ENCODE measurements at regions of chr2 and their contacts with region 1.

Region 1: DNA sequence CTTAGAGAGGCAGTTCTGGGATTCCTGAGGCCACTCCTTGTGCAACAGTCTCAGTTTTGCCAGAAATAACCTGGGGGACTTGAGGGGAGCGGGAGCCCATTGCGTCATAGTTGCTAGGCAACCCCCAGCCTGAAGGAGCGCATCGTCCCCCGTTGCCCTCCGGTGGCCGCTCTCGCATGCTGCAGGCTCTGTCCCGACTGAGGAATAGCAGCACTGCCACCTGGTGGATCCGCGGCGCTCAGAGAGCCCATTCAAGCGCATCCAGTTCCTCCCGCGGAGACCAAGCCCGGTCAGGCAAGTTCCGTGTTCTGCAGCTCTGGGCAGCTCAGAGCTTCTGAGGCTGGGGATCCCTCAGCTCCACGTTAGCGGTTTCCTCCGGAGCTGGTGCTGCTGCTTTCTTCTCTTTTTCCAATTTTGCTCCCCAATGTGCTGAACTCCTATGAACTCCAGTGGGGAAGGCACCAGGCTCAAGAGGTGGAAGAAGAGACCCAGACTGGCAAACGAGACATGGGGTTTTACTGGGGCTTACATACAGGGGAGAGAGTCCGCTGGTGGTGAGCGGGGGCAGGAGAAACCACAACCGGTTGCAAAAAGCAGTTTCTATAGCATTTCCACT is 15.1 kb downstream of the SLC4A3 start:
- DNase-seq: peak; percentile 95
- H3K4me3 Mint-ChIP-seq: no peak overlapping the region
- H3K27ac Mint-ChIP-seq: no peak overlapping the region
- H3K4me1 Mint-ChIP-seq: peaks cover 5% of the 10 kb centered on the region
- H3K27me3 Mint-ChIP-seq: peaks cover 6% of the 10 kb centered on the region

Region 2: DNA sequence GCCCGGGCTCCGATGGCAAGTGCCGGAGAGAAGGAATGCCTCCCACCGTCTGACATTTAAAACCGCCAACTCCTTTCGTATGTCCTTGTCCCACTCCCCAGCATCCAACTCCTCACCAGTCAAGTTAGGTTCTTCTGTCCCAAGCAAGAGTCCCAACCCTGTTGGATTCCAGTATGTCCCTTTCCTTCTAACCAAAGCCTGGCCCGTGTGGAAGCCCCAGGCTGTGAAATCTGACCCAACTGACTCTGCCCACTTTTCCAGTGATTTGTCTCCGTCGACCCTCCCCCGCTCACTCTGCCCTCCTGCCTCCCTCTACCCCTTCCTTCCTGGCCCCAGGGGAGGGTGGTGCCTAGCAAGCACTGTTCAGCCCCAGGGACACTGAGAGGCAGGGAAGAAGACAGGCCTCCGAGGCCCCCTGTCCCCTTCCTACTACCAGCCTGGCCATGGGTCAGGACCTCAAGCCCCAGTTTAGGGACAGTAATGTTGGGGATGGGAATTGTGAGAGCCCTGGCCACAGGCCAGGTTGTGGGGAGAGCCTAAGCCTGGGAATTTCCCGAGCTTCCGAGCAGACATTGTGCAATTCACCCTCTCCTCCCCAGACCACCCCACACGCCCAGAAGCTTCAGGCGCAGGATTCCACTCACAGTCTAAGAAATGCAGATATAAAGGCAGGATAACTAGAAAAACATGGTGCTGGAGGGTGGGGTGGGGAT is 1318.6 kb before region 1 on chr2:
- CTCF ChIA-PET with region 1: no interaction called
- intact Hi-C with region 1: no loop called
- DNase-seq: no peak
- H3K4me3 Mint-ChIP-seq: peak overlapping the region; percentile 78
- H3K27ac Mint-ChIP-seq: no peak overlapping the region
- H3K4me1 Mint-ChIP-seq: peaks cover 39% of the 10 kb centered on the region
- H3K27me3 Mint-ChIP-seq: peaks cover 4% of the 10 kb centered on the region

Region 3: GRCh38 chr2:219475697-219476651 is 166.6 kb before region 1 on chr2:
- CTCF ChIA-PET with region 1: no interaction called
- intact Hi-C with region 1: loop called (anchors 1 kb)
- DNase-seq: peak; percentile 80
- H3K4me3 Mint-ChIP-seq: no peak overlapping the region
- H3K27ac Mint-ChIP-seq: no peak overlapping the region
- H3K4me1 Mint-ChIP-seq: peaks cover 4% of the 10 kb centered on the region
- H3K27me3 Mint-ChIP-seq: peaks cover 2% of the 10 kb centered on the region

Region 4: GRCh38 chr2:219597552-219598307 is 44.8 kb before region 1 on chr2 and contains the start of gene STK11IP:
- CTCF ChIA-PET with region 1: interaction called, 6 read pairs
- intact Hi-C with region 1: loop called (anchors 1 kb)
- DNase-seq: peak; percentile 96
- H3K4me3 Mint-ChIP-seq: peak within 1 kb of the TSS; percentile 94
- H3K27ac Mint-ChIP-seq: peak within 1 kb of the TSS; percentile 94
- H3K4me1 Mint-ChIP-seq: peaks cover 10% of the 10 kb centered on the region
- H3K27me3 Mint-ChIP-seq: no peaks in the 10 kb centered on the region
- total RNA-seq, gene STK11IP: 32.1 TPM

Region 5: GRCh38 chr2:219658196-219658846 is 15.7 kb after region 1 on chr2:
- CTCF ChIA-PET with region 1: interaction called, 11 read pairs
- intact Hi-C with region 1: no loop called
- DNase-seq: no peak
- H3K4me3 Mint-ChIP-seq: no peak overlapping the region
- H3K27ac Mint-ChIP-seq: no peak overlapping the region
- H3K4me1 Mint-ChIP-seq: no peaks in the 10 kb centered on the region
- H3K27me3 Mint-ChIP-seq: peaks cover 12% of the 10 kb centered on the region

Region 6: DNA sequence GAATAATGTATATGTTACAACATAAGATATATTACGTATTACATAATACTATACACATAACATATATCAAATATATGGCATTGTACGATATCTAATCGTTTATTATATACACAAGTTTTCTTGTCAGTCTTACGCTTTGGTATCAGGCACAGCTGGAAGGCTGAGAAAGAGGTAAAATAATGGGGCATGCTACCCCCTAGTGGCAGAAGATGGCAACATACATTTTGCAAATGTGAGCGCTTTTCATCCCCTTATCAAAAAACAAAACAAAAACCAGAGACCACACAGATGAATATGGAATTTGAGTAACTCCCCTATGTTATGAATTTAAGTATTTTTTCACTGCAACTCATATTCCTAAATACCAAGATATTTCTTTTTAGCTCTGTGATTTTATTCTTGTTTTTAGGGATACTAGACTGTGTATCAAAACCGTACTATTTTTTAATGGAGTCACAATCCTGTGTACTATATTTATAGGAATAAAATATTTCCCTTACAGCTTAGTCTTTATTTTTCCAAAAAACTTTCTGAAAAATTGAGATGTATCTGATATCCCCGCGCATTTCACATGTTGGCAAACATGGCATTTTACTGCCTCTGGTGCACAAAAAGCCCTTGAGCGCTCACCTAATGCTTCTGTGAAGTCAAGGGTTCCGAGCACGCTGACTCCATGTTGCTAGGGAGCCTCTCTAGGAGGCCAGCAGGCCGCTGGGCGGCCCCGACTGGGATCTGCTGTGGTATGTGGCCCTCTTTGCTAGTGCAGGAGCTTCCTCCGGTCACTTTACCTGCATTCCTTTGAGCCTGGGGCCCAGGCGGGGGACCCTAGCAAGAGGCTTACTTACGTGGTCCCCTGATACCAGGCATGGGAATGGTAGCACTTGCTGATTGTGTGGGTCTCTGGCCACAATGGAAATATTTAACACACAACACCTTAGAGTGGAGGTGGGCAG is 47.4 kb after region 1 on chr2:
- CTCF ChIA-PET with region 1: interaction called, 4 read pairs
- intact Hi-C with region 1: loop called (anchors 1 kb)
- DNase-seq: peak; percentile 71
- H3K4me3 Mint-ChIP-seq: no peak overlapping the region
- H3K27ac Mint-ChIP-seq: no peak overlapping the region
- H3K4me1 Mint-ChIP-seq: peaks cover 7% of the 10 kb centered on the region
- H3K27me3 Mint-ChIP-seq: peaks cover 21% of the 10 kb centered on the region